Activated CD4-positive, alpha-beta T cell treated with anti-CD3 and anti-CD28 coated beads, Interleukin-2, amount 10 ng/mL, durations not matched to agents 24 days and 14 days (primary cell): ENCODE measurements at regions of chr16 and their contacts with region 1.

Region 1: DNA sequence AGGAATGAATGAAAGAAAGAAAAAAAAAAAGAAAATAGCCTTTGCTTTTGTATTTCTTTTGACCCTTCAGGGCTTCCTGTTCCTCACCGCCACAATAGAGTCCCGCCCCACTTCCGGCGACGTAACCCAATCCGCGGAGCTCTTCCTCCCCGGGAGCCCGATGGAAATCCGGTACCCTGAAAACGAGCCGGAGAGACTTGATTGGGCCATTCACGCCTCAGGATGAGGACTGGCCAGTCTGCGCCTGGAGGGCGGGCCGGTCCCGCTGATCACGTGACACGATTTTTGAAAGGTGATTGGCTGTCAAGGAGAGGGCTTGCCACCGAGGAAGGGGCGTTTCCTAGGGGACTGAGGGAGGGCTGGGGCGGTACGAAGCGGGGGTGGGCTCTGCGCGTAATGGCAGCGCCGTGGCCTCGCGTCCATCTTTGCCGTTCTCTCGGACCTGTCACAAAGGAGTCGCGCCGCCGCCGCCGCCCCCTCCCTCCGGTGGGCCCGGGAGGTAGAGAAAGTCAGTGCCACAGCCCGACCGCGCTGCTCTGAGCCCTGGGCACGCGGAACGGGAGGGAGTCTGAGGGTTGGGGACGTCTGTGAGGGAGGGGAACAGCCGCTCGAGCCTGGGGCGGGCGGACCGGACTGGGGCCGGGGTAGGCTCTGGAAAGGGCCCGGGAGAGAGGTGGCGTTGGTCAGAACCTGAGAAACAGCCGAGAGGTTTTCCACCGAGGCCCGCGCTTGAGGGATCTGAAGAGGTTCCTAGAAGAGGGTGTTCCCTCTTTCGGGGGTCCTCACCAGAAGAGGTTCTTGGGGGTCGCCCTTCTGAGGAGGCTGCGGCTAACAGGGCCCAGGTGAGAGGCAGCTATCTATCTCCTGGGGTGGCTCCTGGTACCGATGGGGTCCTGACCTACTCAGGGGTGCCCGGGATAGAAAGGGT is at the starts of genes PSME3IP1 and RSPRY1:
- DNase-seq: peak; percentile 100
- H3K4me3 Mint-ChIP-seq: peak within 1 kb of the TSS; percentile 97
- H3K27ac Mint-ChIP-seq: peak within 1 kb of the TSS; percentile 98
- H3K4me1 Mint-ChIP-seq: peaks cover 34% of the 10 kb centered on the region
- H3K27me3 Mint-ChIP-seq: peaks cover 2% of the 10 kb centered on the region
- total RNA-seq, gene PSME3IP1: 126 and 130 TPM in 2 replicates
- total RNA-seq, gene RSPRY1: 33.0 and 36.6 TPM in 2 replicates

Region 2: DNA sequence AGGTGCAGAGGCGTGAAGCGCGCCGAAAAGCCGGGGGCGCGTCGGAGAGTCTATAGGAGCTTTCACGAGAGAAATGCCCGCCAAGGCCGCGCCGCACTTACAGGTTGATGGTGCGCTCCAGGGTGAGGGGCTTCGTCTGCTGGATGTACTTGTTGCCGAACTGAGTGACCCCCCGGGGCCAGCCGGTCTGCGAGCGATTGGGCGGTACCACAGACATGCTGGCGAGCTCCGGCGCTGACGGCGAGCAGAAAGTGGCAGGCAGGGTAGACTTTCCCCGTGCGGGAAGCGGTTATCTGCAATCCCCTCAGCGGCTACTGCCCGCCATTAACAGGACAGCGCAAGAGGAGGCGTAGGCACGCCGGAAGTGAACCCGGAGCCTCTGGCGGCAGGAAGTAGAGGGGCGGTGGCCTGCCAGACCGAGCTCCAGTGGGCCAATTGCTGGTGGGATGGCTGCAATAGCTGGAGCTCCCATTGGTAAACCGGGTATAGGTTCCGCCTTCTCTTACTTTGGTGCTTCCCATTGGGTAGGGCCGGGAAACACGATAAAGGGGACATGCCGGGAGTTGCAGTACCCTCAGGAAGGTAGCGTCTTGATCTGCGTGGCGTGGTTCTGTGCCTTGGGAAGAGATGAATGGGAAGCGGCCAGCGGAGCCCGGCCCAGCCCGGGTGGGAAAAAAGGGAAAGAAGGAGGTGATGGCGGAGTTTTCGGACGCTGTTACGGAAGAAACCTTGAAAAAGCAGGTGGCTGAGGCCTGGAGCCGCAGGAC is 735.0 kb before region 1 on chr16 and contains the starts of genes NUDT21 and OGFOD1:
- intact Hi-C with region 1: loop called (anchors 10 kb)
- DNase-seq: peak; percentile 97
- H3K4me3 Mint-ChIP-seq: peak within 1 kb of the TSS; percentile 94
- H3K27ac Mint-ChIP-seq: peak within 1 kb of the TSS; percentile 95
- H3K4me1 Mint-ChIP-seq: peaks cover 41% of the 10 kb centered on the region
- H3K27me3 Mint-ChIP-seq: no peaks in the 10 kb centered on the region
- total RNA-seq, gene NUDT21: 282 and 297 TPM in 2 replicates
- total RNA-seq, gene OGFOD1: 87.0 and 89.2 TPM in 2 replicates

Region 3: DNA sequence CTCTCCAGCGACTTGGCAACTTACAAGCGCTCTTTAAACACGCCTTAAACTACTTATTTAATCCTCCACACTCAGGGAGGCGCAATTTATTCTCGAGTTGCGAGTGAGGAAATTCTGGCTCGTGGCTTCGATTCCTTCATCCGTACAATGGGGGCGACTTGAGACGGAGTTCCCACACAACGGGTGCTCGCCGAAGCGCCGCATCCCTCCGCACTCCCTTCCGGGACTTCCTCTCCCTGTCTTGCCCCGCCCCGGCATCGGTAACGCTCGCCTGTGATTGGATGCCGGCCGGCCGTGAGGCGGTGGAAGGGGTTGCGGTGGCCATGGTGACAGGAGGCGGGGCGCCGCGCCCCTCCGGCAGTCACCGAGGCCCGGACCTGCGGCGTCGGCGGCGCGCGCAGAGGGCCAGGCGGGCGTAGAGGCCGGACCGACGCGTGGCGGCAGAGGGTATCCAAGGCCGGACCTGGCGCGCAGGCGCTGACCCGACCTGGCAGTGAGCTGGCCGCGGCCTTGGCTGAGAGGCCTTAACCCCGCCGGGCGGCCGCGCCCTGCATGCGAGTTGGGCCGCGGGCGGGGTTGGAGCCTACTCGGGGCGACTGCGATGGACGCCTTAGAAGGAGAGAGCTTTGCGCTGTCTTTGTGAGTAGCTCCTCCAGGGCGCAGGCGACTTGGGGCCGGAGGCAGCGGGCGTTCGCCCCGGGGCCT is 58.7 kb after region 1 on chr16 and contains the start of gene ARL2BP:
- intact Hi-C with region 1: loop called (anchors 1 kb)
- DNase-seq: peak; percentile 99
- H3K4me3 Mint-ChIP-seq: peak within 1 kb of the TSS; percentile 91
- H3K27ac Mint-ChIP-seq: peak within 1 kb of the TSS; percentile 95
- H3K4me1 Mint-ChIP-seq: peaks cover 14% of the 10 kb centered on the region
- H3K27me3 Mint-ChIP-seq: no peaks in the 10 kb centered on the region
- total RNA-seq, gene ARL2BP: 24.9 and 26.7 TPM in 2 replicates

Region 4: DNA sequence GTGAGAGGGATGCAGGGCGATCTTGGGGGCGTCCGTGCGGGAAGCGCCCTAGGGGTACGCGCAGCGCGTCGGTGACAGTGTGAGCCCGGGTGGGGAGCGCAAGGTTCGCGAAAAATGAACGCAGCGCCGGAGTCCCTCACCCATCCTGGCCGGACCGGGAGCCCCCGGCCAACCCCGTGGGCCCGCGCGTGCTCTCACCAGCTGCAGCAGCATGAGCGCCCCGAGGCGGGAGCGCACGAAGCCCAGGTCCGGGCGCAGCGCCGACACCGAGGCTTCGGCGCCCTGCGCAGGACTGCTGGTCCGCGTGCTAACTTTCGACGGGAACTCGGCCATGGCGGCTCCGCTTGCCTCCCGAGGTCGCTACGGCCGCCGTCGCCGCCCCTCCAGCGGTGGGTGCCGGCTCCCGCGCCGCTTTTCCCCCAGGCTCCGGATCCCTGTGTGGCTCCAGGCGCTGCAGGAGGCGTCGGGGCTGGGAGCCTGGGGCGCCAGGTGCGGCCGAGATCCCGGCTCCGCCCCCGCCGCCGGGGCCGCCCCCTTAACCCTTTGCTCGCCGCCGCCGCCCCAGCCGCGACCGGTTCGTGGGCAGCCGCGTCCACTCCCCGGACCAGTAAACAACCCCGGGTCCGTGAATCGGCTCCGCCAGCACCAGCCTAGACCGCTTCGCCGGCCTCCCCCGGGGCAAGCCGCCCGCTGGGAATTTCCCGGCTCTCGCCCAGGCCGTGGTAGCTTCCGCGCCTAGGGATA is 98.2 kb after region 1 on chr16 and contains the start of gene PLLP:
- intact Hi-C with region 1: loop called (anchors 10 kb)
- DNase-seq: peak; percentile 86
- H3K4me3 Mint-ChIP-seq: peak within 1 kb of the TSS; percentile 77
- H3K27ac Mint-ChIP-seq: peak within 1 kb of the TSS; percentile 63
- H3K4me1 Mint-ChIP-seq: peaks cover 21% of the 10 kb centered on the region
- H3K27me3 Mint-ChIP-seq: peaks cover 35% of the 10 kb centered on the region
- total RNA-seq, gene PLLP: not detected in 2 replicates

Region 5: DNA sequence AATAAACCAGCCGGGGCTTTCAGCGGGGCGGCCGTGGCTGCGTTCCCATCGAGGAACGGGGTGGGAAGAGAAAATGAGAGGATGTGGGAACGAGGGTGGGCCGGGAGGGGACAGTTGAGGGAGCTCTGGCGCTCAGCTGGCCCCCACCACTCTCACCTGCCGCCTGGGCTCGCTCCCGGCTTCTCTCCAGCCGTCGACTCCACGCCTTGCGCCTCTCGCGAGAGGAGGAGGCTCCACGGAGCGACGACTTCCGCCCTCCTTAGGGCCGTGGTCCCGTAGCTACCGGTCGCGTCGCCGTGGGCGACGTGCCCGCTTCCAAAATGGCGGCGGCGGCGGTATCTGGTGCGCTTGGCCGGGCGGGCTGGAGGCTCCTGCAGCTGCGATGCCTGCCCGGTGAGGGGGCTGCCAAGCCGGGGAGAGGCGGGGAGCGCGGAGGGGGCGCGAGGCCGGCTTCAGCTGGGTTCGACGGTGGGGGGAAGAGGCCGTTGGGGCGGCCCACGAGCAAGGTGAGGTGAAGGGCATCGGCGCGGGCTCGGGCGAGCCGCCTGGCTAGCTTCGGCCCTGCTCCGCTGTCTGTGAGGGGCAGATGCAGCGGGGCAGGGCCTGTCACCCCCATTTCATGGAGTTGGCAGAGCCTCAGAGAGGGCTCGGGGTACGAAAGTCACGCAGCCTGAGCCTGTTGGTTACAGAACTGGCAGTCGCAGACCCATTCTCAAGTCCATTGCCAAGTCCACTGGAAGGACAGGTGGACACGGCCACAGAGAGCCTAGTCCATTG is 261.2 kb after region 1 on chr16 and contains the starts of genes CIAPIN1 and COQ9:
- intact Hi-C with region 1: loop called (anchors 1 kb)
- DNase-seq: peak; percentile 98
- H3K4me3 Mint-ChIP-seq: peak within 1 kb of the TSS; percentile 95
- H3K27ac Mint-ChIP-seq: peak within 1 kb of the TSS; percentile 92
- H3K4me1 Mint-ChIP-seq: peaks cover 24% of the 10 kb centered on the region
- H3K27me3 Mint-ChIP-seq: no peaks in the 10 kb centered on the region
- total RNA-seq, gene CIAPIN1: 85.4 TPM in 2 replicates
- total RNA-seq, gene COQ9: 55.2 and 56.7 TPM in 2 replicates

Region 6: GRCh38 chr16:57535680-57536305 is 349.6 kb after region 1 on chr16:
- intact Hi-C with region 1: loop called (anchors 10 kb)
- DNase-seq: peak; percentile 98
- H3K4me3 Mint-ChIP-seq: peak overlapping the region; percentile 86
- H3K27ac Mint-ChIP-seq: peak overlapping the region; percentile 89
- H3K4me1 Mint-ChIP-seq: peaks cover 63% of the 10 kb centered on the region
- H3K27me3 Mint-ChIP-seq: no peaks in the 10 kb centered on the region